A549 (cell line): ENCODE measurements at regions of chr15 and their contacts with region 1.

Region 1: GRCh38 chr15:41603941-41604911 is 45.2 kb downstream of the TYRO3 start:
- DNase-seq: peak; percentile 73 to 76
- ATAC-seq: peak; percentile 98 to 99
- H3K4me3 ChIP-seq: peak overlapping the region; percentile 32; the same call in 2 of the 3 replicates
- H3K27ac ChIP-seq: peak overlapping the region in 1 of 2 experiments; percentile 59; a peak in 3 of 6 replicates
- H3K4me1 ChIP-seq: peaks cover 5% of the 10 kb centered on the region; the same call in 1 of the 3 replicates
- CTCF ChIP-seq: peak; percentile 64
- EP300 ChIP-seq: no peak
- POLR2A ChIP-seq: no peak
- RAD21 ChIP-seq: peak; percentile 52 to 64; a peak in 4 of 5 replicates

Region 2: DNA sequence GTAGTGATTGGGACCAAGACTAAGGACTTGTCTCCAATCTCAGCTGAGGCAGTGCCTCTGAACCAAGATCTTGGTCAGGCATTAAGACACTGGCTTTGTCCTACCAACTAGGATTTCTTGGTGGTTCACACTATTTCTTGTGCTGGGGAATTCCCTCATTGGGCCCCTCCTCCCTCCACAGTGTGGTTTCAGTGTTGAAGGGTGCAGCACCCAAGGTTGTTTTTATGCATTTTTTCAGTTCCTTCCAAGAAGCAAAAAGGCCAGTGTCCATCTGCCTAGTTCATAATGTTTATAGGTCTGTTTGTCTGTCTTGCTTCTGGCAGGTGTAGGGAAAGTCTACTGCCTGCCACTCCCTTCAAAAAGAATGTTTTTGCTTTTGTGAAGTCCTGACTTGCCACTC is 121.1 kb before region 1 on chr15:
- CTCF ChIA-PET with region 1: no interaction called
- POLR2A ChIA-PET with region 1: no interaction called
- DNase-seq: no peak
- ATAC-seq: no peak
- H3K4me3 ChIP-seq: no peak overlapping the region
- H3K27ac ChIP-seq: no peak overlapping the region
- H3K4me1 ChIP-seq: no peaks in the 10 kb centered on the region
- CTCF ChIP-seq: no peak
- EP300 ChIP-seq: no peak
- POLR2A ChIP-seq: no peak
- RAD21 ChIP-seq: no peak

Region 3: DNA sequence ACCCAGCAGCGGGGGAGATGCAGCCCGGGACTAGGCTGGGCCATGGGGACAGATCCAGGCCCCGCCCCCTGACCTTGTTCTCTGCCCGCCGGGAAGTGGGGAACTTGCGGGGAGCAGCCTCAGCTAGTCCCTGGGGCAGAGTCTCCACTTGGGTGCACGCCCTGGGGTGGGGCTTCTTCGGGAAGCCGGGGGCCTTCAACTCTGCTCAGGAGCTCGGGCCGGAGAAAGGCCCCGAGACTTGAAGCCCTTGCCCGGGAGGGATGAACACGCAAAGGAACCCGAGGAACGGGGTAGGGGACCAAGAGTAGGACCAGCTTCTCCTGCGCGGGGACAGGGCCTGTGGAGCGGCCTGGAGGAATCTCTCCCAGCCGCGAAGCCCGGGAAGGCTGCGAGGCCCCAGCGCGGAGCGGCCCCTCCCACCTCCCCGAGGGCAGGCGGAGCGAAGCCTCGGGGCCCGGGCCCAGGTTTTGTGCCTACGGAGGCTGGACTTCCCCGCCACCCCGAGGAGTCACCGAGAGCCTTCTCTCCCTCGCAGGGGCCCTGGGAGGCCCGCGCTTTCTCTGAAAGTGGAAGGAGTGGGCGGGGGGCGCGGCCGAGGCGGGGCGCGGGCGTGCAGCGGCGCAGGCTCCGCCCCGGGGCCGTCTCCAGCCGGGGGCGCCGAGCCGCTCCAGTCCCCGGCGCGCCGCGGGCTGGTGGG is 110.9 kb before region 1 on chr15 and contains the start of gene ITPKA:
- CTCF ChIA-PET with region 1: no interaction called
- POLR2A ChIA-PET with region 1: no interaction called
- DNase-seq: peak; percentile 47 to 61
- ATAC-seq: peak; percentile 77 to 81
- H3K4me3 ChIP-seq: peak within 1 kb of the TSS; percentile 61
- H3K27ac ChIP-seq: peak within 1 kb of the TSS; percentile 79 to 90
- H3K4me1 ChIP-seq: peaks cover 16% of the 10 kb centered on the region; the same call in 2 of the 3 replicates
- CTCF ChIP-seq: no peak
- EP300 ChIP-seq: no peak
- POLR2A ChIP-seq: no peak
- RAD21 ChIP-seq: no peak
- polyA plus RNA-seq, gene ITPKA: 0.52 and 0.73 TPM in 2 replicates

Region 4: DNA sequence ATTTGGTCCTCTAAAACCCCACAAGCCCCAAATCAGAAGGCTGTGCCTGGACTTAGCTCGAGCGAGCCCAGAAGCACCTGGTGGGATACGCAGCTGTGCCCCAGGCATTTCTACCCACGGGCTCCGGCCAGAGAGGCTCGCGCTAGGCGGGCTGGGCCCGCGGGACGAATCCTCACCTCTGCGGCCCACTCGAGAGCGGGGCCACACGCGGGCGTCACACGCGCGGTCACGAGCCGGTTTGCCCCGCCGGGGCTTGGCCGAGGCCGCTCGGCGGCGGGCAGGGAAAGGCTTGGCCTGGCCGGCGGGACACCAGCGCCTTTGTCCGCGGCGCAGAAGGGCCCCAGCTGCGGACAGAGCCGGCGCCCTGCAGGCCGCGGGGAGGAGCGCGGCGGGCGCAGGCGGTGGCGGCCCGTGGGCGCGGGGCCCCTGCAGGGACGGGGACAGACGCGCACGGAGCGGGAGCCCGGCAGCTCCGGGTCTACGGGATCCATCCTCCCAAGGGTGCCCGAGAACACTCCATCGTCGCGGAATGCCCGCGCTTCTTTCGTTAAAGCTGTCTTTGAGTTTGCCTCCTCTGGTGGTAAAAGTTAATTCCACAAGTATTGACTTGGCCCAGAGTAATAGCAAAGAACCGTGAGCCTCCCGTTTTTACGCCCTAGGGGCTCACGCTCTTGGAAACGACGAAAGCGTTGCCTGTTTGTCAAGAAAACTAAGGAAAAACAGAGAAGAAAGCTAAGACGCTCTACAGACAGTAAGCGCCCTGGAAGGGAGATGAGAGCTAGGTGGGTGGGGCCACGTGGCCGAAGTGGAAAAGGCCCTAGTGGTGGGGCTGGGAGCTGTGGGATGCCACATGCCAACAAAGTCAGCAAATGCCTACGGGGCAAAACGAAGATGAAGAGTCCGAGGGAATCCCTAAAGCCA is 18.8 kb before region 1 on chr15:
- CTCF ChIA-PET with region 1: interaction called, 14 read pairs
- POLR2A ChIA-PET with region 1: no interaction called
- DNase-seq: peak; percentile 35 to 44
- ATAC-seq: peak; percentile 91 to 92
- H3K4me3 ChIP-seq: peak overlapping the region; percentile 39
- H3K27ac ChIP-seq: peak overlapping the region; percentile 41 to 76; a peak in 5 of 6 replicates
- H3K4me1 ChIP-seq: peaks cover 5% of the 10 kb centered on the region; the same call in 1 of the 3 replicates
- CTCF ChIP-seq: peak; percentile 24; the same call in 2 of the 3 replicates
- EP300 ChIP-seq: no peak
- POLR2A ChIP-seq: no peak
- RAD21 ChIP-seq: no peak